BJ (cell line): ENCODE measurements at regions of chr15 and their contacts with region 1.

Region 1: GRCh38 chr15:31472636-31473384 is 146.2 kb downstream of the KLF13 start:
- DNase-seq: no peak
- H3K4me3 ChIP-seq: no peak overlapping the region
- H3K27me3 ChIP-seq: no peaks in the 10 kb centered on the region
- CTCF ChIP-seq: no peak

Region 2: GRCh38 chr15:31458591-31459399 is 14.0 kb before region 1 on chr15:
- CTCF ChIA-PET with region 1: interaction called, 7 read pairs
- POLR2A ChIA-PET with region 1: interaction called, 18 read pairs
- DNase-seq: no peak
- H3K4me3 ChIP-seq: no peak overlapping the region
- H3K27me3 ChIP-seq: no peaks in the 10 kb centered on the region
- CTCF ChIP-seq: no peak